A549 (cell line): ENCODE measurements at regions of chr11 and their contacts with region 1.

Region 1: GRCh38 chr11:44120169-44120568 is 24.7 kb downstream of the EXT2 start:
- DNase-seq: peak; percentile 18 to 39
- ATAC-seq: peak; percentile 76 to 86; a peak in 4 of 6 replicates
- H3K4me3 ChIP-seq: no peak overlapping the region
- H3K27ac ChIP-seq: no peak overlapping the region
- H3K4me1 ChIP-seq: no peaks in the 10 kb centered on the region
- CTCF ChIP-seq: no peak
- EP300 ChIP-seq: no peak
- POLR2A ChIP-seq: no peak
- RAD21 ChIP-seq: 0 out of 5 replicates have a peak, but pooled peaks of 1 of the 2 experiments have one; percentile 19

Region 2: GRCh38 chr11:44104481-44105294 is 15.5 kb before region 1 on chr11:
- CTCF ChIA-PET with region 1: interaction called, 18 read pairs
- POLR2A ChIA-PET with region 1: no interaction called
- DNase-seq: peak; percentile 6 to 37
- ATAC-seq: peak; percentile 60 to 68; a peak in 4 of 6 replicates
- H3K4me3 ChIP-seq: no peak overlapping the region
- H3K27ac ChIP-seq: no peak overlapping the region
- H3K4me1 ChIP-seq: no peaks in the 10 kb centered on the region
- CTCF ChIP-seq: no peak
- EP300 ChIP-seq: no peak
- POLR2A ChIP-seq: no peak
- RAD21 ChIP-seq: no peak

Region 3: DNA sequence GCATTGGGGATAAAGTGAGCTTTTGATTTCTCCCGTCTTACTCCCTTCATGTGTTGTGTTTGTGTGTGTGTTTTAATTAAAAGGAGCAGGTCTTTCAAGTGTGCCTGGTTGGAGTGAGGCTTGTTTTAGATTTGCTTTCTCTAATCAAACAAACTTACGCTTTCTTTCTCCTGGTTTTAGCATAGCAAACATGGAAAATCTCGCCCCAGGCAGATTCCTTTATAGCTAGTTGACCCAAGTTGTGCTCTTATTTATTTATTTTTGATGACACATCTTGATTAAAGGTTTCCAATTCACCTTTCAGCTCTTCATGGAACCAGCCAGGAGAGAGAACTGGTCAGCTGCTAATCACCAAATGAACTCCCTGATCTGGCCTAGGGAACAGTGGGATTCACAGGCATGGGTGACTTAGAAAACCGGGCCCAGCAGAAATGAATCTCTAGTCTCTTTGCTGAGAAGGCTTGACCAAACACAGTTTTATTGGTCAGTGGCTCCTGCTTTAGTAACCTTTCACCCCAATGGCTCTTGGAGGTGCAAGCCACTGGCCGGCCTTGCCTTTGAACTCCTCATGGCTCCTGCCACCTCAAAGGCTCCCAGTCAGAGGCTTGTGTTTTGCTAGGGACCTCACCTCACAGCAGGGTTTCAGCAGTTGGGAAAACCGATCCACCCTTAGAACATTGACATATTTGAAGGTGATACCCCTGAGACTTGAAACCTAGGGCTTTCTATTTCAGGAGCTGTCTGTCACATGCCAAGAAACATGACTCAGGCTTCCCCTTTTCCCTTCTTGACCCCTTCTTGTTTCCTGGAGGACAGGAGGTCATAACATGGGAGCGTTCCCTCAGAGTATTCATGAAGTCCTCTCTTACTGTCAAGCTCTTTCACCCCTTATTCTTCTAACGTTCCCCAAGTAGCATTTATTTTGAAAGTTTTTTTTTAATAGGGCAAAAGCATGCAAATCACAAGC is 24.1 kb after region 1 on chr11:
- CTCF ChIA-PET with region 1: no interaction called
- POLR2A ChIA-PET with region 1: interaction called, 11 read pairs
- DNase-seq: no peak
- ATAC-seq: no peak
- H3K4me3 ChIP-seq: no peak overlapping the region
- H3K27ac ChIP-seq: no peak overlapping the region
- H3K4me1 ChIP-seq: peaks cover 14% of the 10 kb centered on the region
- CTCF ChIP-seq: no peak
- EP300 ChIP-seq: no peak
- POLR2A ChIP-seq: no peak
- RAD21 ChIP-seq: no peak